ENCODE measurements at regions of chr3 and their contacts with region 1.

Region 1: GRCh38 chr3:180912304-180913296 is at the start of gene FXR1:
- DNase-seq: peak; percentile 97
- H3K27ac ChIP-seq: peak within 1 kb of the TSS; percentile 89
- CTCF ChIP-seq: peak; percentile 83

Region 2: DNA sequence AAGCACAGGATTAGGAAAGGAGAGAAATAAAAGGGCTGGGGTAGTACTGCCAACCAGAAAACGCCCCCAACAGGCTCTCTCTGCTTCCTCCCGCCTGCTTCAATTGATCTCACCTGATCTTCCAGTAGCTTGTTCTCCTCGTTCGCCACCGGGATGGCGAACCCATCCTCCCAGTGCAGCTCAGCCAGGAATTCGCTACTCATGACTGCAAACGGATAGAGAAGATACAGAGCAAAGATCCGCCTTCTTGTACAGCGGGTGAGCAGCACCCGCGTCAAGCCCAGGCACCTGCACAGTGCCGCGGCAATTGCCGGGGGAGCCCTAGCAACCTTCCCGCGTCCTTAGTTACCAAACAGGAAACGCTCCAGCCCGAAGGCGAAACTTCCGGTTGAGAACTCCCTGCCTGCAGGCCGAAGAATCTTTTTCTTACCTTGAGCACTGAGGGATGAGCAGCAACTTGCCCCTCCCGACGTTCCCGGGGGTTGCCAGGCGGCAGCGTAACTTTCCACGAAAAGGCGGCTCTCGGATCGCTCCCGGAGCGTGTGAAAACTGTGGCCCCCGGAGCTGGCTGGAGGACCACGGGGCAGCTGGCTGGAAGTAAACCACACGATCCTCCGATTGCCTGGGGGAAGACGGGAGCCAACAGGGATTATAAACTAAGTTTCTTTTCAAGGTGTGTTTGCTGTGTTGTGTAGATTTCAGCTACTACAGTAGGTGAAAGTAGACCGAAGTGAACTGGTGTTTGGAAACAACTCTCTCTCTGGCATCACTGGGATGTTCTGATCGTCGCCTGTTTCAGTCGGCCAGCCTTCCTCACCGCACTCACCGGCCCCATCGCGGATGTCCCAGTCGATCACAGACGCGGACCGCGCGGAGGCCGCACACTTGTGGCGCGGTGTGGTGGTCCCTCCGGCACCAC is 233.2 kb before region 1 on chr3 and contains the start of gene CCDC39:
- CTCF ChIA-PET with region 1: no interaction called
- POLR2A ChIA-PET with region 1: no interaction called
- DNase-seq: peak; percentile 71
- H3K27ac ChIP-seq: peak within 1 kb of the TSS; percentile 55
- CTCF ChIP-seq: no peak

Region 3: DNA sequence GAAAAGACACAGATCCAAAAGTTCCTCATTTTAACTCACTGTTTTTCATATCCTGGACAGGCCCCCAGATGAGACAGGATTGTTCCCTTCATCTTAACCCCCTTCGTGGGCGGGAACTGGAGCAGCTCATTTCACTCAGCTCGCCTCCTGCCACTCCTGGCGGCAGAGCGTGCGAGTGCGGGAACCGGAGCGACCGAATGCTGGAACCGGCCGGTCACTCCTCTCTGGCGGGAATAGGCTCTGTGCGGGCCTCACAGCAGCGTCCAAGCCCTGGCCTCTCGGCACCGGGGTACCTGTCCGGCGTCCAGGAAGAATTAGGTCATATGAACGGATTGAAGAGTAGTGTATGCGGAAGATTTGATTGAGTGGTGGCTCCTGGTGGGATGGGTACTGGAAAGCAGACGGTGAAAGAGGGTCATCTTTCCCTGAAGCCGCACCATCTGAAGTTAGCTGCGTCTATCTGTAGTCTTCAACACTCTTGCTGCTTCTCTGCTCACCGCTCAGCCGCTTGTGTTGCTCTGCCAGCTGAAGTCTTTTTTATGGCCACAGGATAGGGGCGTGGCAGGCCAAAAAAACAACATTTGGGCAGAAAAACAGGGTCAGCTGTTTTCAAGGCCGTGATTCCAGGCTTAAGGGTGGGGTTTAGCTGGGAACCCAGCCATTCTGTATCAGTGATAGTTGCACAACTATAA is 42.4 kb before region 1 on chr3:
- CTCF ChIA-PET with region 1: no interaction called
- POLR2A ChIA-PET with region 1: no interaction called
- DNase-seq: no peak
- H3K27ac ChIP-seq: no peak overlapping the region
- CTCF ChIP-seq: no peak

Region 4: DNA sequence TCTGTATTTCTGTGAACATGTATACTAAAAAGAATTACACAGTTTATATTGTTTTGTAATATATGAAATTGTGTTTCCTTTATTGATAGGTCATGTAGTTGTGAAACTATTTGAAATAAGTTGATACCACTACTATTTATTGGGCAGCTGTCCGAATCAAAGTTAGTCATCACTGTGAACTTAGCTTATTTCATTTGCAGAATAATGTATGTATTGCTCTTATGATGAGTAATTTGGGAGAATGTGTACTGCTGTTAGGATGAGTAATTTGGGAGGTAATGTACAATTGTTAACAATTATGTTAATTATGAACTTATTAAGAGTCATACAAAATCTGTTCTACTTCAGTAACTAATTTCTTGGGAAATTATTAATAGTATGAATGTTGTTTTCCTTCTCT is 22.0 kb after region 1 on chr3:
- CTCF ChIA-PET with region 1: interaction called, 12 read pairs
- POLR2A ChIA-PET with region 1: no interaction called
- DNase-seq: peak; percentile 41
- H3K27ac ChIP-seq: no peak overlapping the region
- CTCF ChIP-seq: no peak